Activated CD8-positive, alpha-beta T cell treated with anti-CD3 and anti-CD28 coated beads, Interleukin-2, amount 10 ng/mL, durations not matched to agents 7 days and 5 days (primary cell): ENCODE measurements at regions of chr2 and their contacts with region 1.

Region 1: DNA sequence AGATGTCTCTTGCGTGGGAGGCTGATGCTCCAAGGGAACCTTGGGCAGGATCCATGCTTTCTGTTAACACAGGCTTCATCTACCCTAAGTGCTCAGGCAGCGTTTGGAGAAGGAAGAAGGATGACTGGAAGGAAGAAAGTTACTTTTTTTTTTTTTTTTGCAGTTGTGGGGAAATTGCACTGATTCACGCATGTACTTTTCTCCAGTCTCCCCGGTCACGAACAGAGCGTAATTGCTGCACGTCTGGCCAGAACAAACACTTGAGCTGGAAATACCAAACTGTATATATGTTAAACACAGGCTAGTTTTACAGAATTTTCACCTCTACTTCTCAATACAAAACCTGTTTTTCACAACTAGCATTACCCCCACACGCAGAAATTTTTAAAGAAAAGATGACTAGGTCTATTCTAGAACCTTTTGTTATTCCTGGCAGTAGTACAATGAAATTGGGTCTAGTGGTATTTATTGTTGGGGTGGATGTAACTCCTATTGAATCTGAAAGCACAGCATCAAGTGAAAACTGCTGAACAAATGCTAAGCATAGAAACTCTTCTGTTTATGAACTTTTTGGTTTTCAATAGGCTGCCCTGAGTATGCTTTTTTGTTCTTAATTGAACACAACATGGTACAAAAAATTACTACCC is 9.3 kb upstream of the SCYGR5 start:
- DNase-seq: no peak
- ATAC-seq: no peak
- H3K4me3 Mint-ChIP-seq: no peak overlapping the region
- H3K27ac Mint-ChIP-seq: no peak overlapping the region
- H3K4me1 Mint-ChIP-seq: no peaks in the 10 kb centered on the region
- H3K27me3 Mint-ChIP-seq: peaks cover 9% of the 10 kb centered on the region

Region 2: DNA sequence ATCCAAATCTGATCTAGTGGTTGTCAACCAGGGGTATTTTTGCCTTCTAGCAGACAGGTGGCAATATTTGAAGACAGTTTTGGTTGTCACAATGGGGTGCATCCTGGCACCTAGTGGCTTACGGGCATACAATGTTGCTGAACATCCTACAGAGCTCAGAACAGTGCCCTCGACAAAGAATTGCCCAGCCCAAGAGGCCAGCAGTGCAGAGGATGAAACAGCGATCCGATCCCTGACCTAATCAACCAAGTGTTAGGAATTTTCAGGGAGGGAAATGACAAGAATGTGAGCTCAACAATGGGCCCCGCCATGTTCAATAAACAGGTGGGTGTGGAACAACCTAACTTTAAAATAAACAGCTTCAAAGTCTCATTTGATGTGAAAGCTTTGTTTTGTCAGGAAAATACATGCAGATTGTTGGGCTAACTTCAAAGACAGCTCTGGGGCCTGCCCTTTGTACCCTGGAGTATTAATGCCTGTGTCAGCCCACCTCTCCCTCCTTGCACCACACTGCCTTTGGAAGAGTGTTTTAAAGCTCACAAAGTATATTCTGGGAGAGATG is 13.3 kb before region 1 on chr2:
- CTCF ChIA-PET with region 1: interaction called, 15 read pairs
- POLR2A ChIA-PET with region 1: no interaction called
- DNase-seq: no peak
- ATAC-seq: no peak
- H3K4me3 Mint-ChIP-seq: no peak overlapping the region
- H3K27ac Mint-ChIP-seq: no peak overlapping the region
- H3K4me1 Mint-ChIP-seq: no peaks in the 10 kb centered on the region
- H3K27me3 Mint-ChIP-seq: no peaks in the 10 kb centered on the region

Region 3: GRCh38 chr2:227862227-227862740 is 205.0 kb after region 1 on chr2:
- CTCF ChIA-PET with region 1: interaction called, 13 read pairs
- POLR2A ChIA-PET with region 1: no interaction called
- DNase-seq: peak; percentile 40
- ATAC-seq: no peak
- H3K4me3 Mint-ChIP-seq: no peak overlapping the region
- H3K27ac Mint-ChIP-seq: no peak overlapping the region
- H3K4me1 Mint-ChIP-seq: no peaks in the 10 kb centered on the region
- H3K27me3 Mint-ChIP-seq: no peaks in the 10 kb centered on the region

Region 4: GRCh38 chr2:227939271-227940027 is 282.1 kb after region 1 on chr2:
- CTCF ChIA-PET with region 1: no interaction called
- POLR2A ChIA-PET with region 1: no interaction called
- DNase-seq: no peak
- ATAC-seq: no peak
- H3K4me3 Mint-ChIP-seq: no peak overlapping the region
- H3K27ac Mint-ChIP-seq: no peak overlapping the region
- H3K4me1 Mint-ChIP-seq: no peaks in the 10 kb centered on the region
- H3K27me3 Mint-ChIP-seq: peaks cover 2% of the 10 kb centered on the region